CD8-positive, alpha-beta T cell (primary cell): ENCODE measurements at regions of chr14 and their contacts with region 1.

Region 1: DNA sequence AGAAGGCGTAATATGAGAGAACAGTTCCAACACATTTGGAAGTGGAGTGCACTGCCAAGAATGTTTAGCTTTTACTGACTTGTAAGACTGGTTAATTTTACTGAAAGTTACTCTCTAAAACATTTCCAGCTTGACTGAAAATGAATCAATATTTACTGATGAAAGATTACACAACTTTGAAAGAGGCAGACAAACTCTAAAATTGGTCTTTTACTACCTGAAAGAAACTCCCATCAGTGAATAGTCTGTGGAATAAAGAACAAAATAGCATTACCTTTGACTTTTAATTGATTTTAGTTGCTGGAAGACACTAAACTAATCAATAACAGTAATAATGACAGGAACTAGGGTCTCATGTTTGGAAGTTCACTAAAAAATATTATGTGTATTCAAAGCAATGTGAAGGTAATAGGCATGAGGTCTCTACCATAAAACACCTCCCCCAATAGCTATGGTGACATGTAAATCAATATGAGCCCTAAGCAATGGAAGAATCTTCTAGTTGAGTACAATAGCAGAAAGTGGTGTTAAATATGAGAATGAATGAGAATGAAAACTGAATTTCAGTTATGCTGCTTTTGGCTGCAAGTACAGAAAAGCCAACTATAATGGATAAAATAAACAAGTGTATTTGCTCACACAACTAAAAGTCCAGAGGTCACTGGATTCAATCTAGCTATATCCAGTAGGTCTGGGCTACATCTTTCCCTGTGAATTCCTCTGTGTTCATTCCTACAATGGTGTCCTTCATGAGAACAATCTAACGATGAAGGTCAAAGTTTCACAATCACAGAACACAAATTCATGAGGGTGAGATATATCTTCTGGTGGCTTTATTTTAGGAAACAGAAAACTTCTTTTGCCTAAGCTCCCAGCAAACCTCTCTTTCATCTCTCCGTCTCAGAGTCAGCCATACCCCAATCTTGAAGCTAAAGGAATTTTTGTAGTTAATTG is 728.1 kb downstream of the FSCB start:
- DNase-seq: no peak
- ATAC-seq: no peak
- H3K4me3 ChIP-seq: no peak overlapping the region
- H3K4me3 Mint-ChIP-seq: no peak overlapping the region
- H3K27ac ChIP-seq: no peak overlapping the region
- H3K27ac Mint-ChIP-seq: no peak overlapping the region
- H3K4me1 ChIP-seq: no peaks in the 10 kb centered on the region
- H3K4me1 Mint-ChIP-seq: no peaks in the 10 kb centered on the region
- H3K27me3 ChIP-seq: no peaks in the 10 kb centered on the region
- H3K27me3 Mint-ChIP-seq: no peaks in the 10 kb centered on the region
- CTCF ChIP-seq: no peak

Region 2: DNA sequence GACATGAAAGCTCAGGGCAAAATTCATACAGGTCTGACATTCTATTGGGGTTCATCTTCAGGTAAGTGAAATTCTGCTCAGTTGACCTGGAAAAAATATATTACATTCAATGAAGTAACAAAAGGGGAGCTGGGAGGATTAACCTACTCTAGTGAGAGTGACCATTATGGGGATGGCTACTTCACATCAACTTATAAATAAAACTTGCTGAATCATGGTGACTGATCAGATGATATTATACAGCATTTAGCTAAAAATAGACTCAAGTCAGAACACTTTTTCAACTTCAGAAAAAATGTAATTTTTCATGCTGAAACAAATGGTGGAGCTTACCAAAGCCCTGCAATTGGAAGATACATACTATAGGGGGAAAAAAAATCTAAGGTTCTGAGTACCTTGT is 72.1 kb before region 1 on chr14:
- CTCF ChIA-PET with region 1: no interaction called
- POLR2A ChIA-PET with region 1: no interaction called
- intact Hi-C with region 1: no loop called
- DNase-seq: no peak
- ATAC-seq: no peak
- H3K4me3 ChIP-seq: no peak overlapping the region
- H3K4me3 Mint-ChIP-seq: no peak overlapping the region
- H3K27ac ChIP-seq: no peak overlapping the region
- H3K27ac Mint-ChIP-seq: no peak overlapping the region
- H3K4me1 ChIP-seq: no peaks in the 10 kb centered on the region
- H3K4me1 Mint-ChIP-seq: no peaks in the 10 kb centered on the region
- H3K27me3 ChIP-seq: no peaks in the 10 kb centered on the region
- H3K27me3 Mint-ChIP-seq: no peaks in the 10 kb centered on the region
- CTCF ChIP-seq: no peak

Region 3: GRCh38 chr14:43729143-43729542 is 49.8 kb before region 1 on chr14:
- CTCF ChIA-PET with region 1: no interaction called
- POLR2A ChIA-PET with region 1: no interaction called
- intact Hi-C with region 1: loop called in 1 of 2 experiments (anchors 1 kb)
- DNase-seq: no peak
- ATAC-seq: no peak
- H3K4me3 ChIP-seq: no peak overlapping the region
- H3K4me3 Mint-ChIP-seq: no peak overlapping the region
- H3K27ac ChIP-seq: no peak overlapping the region
- H3K27ac Mint-ChIP-seq: no peak overlapping the region
- H3K4me1 ChIP-seq: no peaks in the 10 kb centered on the region
- H3K4me1 Mint-ChIP-seq: no peaks in the 10 kb centered on the region
- H3K27me3 ChIP-seq: no peaks in the 10 kb centered on the region
- H3K27me3 Mint-ChIP-seq: no peaks in the 10 kb centered on the region
- CTCF ChIP-seq: no peak

Region 4: GRCh38 chr14:44149597-44149996 is 370.6 kb after region 1 on chr14:
- CTCF ChIA-PET with region 1: no interaction called
- POLR2A ChIA-PET with region 1: no interaction called
- intact Hi-C with region 1: no loop called
- DNase-seq: no peak
- ATAC-seq: no peak
- H3K4me3 ChIP-seq: no peak overlapping the region
- H3K4me3 Mint-ChIP-seq: no peak overlapping the region
- H3K27ac ChIP-seq: no peak overlapping the region
- H3K27ac Mint-ChIP-seq: no peak overlapping the region
- H3K4me1 ChIP-seq: no peaks in the 10 kb centered on the region
- H3K4me1 Mint-ChIP-seq: no peaks in the 10 kb centered on the region
- H3K27me3 ChIP-seq: no peaks in the 10 kb centered on the region
- H3K27me3 Mint-ChIP-seq: no peaks in the 10 kb centered on the region
- CTCF ChIP-seq: no peak